ENCODE measurements at regions of chr6 and their contacts with region 1.

Region 1: GRCh38 chr6:35057449-35058357 is 83.4 kb downstream of the TCP11 start:
- DNase-seq: peak in 1 of 2 donors; percentile 63
- ATAC-seq: peak; percentile 62 to 82 (median 72)
- H3K4me3 ChIP-seq: peak overlapping the region in 3 of 10 donors; percentile 3 to 23 (median 8)
- H3K27ac ChIP-seq: peak overlapping the region; percentile 32 to 85 (median 68)
- H3K4me1 ChIP-seq: peaks cover 21 to 77% (median 55%) of the 10 kb centered on the region in 9 donors
- H3K27me3 ChIP-seq: no peaks in the 10 kb centered on the region
- CTCF ChIP-seq: no peak

Region 2: DNA sequence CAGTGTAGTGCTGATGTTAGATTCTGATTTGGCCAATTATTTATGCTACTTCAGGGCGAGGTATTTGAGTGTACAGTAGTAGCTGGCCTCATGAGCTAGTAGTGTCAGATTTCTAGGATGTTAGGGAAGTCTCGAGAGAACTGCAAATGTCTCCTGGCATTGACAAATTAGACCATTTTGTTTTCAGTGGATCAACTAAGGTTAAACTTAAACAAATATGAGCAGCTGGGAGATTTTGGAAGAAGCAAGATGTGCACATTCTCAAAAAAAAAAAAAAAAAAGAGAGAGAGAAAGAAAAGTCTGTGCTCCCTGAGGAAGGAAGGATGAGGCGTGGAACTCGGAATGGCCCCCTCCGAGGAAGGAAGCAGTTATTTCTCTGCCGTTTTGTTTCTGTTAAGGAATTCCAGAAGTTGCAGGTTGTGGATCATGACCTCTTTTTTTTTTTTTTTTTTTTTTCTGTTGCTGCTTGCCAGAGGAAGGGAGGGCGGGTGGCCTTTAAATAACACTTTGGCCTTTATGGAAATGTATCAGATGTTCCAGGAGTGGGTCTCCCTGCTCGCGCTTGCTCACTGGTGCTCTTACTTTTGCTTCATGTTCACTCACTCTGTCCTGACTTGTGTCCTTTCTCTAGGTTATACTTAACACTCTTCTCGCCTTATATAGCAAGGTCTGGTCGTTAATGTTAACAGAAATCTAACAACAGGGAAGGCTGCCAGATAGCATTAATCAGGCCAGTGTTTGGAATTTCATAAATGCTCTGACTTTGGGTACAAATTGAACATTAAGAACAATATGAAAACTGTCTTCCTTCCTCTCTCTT is 41.0 kb before region 1 on chr6:
- intact Hi-C with region 1: loop called in 5 of 10 experiments (anchors 5 kb)
- DNase-seq: peak; percentile 37 to 66
- ATAC-seq: peak; percentile 67 to 84 (median 81)
- H3K4me3 ChIP-seq: peak overlapping the region; percentile 37 to 73 (median 59)
- H3K27ac ChIP-seq: peak overlapping the region; percentile 89 to 99 (median 95)
- H3K4me1 ChIP-seq: peaks cover 15 to 89% (median 76%) of the 10 kb centered on the region in 9 donors
- H3K27me3 ChIP-seq: no peaks in the 10 kb centered on the region
- CTCF ChIP-seq: no peak

Region 3: DNA sequence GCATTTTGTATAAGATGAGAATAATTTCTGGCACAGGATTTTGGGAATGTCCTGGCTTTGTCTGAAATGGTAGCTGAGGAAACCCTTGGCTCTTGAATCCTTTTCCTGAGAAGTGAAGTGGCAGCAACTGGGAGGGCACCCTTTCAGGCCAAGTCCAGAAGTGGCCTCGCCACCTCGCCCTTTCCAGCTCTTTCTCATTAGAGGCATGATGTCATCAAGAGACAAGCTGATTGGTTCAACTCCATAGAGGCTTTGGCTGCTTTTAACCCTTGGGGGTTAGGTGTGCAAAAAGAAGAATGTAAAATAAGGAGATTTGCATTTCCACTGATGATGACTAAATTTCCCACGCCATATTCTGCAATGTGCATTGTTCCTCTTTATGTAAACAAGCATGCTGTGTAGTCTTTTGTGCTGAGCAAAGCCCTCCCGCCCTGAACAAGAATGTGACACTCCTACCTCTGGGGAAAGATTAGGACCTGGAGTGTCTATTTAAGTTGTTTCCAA is 33.1 kb before region 1 on chr6:
- intact Hi-C with region 1: loop called in 4 of 10 experiments (anchors 5 kb)
- DNase-seq: peak; percentile 52 to 62
- ATAC-seq: peak; percentile 80 to 95 (median 86)
- H3K4me3 ChIP-seq: peak overlapping the region in 5 of 10 donors; percentile 0 to 18 (median 4)
- H3K27ac ChIP-seq: peak overlapping the region; percentile 31 to 99 (median 82)
- H3K4me1 ChIP-seq: peaks cover 19 to 100% (median 96%) of the 10 kb centered on the region in 9 donors
- H3K27me3 ChIP-seq: no peaks in the 10 kb centered on the region
- CTCF ChIP-seq: no peak

Region 4: GRCh38 chr6:35238843-35239311 is 181.2 kb after region 1 on chr6:
- intact Hi-C with region 1: no loop called
- DNase-seq: peak; percentile 84 to 87
- ATAC-seq: peak; percentile 81 to 96 (median 92)
- H3K4me3 ChIP-seq: no peak overlapping the region
- H3K27ac ChIP-seq: peak overlapping the region in 9 of 10 donors; percentile 30 to 75 (median 57)
- H3K4me1 ChIP-seq: peaks cover 9 to 51% (median 25%) of the 10 kb centered on the region in 9 donors
- H3K27me3 ChIP-seq: no peaks in the 10 kb centered on the region
- CTCF ChIP-seq: no peak

Measured in heart right ventricle (tissue), 16 donors.